Activated CD4-positive, alpha-beta memory T cell treated with anti-CD3 and anti-CD28 coated beads, Interleukin-2, amount 10 ng/mL, durations not matched to agents 7 days and 5 days (primary cell): ENCODE measurements at regions of chr22 and their contacts with region 1.

Region 1: DNA sequence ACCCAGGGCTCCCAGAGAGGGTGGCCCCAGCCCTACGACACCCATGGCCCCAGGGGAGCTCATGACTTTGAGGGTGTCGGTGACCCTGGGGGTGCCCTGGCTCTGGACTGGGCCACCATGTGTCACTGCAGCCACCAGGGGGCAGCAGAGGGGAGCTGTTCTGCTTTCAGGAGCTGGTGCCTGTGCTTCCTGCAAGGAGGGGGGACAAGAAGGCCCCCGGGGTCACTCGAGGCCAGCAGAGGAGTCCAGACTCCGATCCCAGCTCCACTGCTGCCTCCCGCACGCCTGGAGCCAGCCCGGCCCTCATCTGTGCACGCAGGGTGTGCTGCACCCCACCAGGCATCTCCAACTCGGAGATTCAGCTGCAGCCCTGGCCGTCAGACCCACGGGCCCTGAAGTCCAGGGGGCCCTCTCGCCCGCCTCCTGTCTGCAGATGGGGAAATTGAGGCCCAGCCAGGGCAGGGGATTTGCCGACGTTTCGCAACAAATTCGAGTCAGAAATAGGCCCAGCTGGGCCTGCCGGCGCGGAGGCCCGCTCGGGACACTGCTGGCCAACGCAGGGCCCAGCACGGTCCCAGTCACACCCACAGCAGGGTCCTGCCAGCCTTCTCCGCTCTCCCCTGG is 29.5 kb upstream of the WNT7B start:
- DNase-seq: peak; percentile 87
- H3K4me3 Mint-ChIP-seq: no peak overlapping the region
- H3K27ac Mint-ChIP-seq: no peak overlapping the region
- H3K4me1 Mint-ChIP-seq: peaks cover 7% of the 10 kb centered on the region
- H3K27me3 Mint-ChIP-seq: peaks cover 2% of the 10 kb centered on the region

Region 2: DNA sequence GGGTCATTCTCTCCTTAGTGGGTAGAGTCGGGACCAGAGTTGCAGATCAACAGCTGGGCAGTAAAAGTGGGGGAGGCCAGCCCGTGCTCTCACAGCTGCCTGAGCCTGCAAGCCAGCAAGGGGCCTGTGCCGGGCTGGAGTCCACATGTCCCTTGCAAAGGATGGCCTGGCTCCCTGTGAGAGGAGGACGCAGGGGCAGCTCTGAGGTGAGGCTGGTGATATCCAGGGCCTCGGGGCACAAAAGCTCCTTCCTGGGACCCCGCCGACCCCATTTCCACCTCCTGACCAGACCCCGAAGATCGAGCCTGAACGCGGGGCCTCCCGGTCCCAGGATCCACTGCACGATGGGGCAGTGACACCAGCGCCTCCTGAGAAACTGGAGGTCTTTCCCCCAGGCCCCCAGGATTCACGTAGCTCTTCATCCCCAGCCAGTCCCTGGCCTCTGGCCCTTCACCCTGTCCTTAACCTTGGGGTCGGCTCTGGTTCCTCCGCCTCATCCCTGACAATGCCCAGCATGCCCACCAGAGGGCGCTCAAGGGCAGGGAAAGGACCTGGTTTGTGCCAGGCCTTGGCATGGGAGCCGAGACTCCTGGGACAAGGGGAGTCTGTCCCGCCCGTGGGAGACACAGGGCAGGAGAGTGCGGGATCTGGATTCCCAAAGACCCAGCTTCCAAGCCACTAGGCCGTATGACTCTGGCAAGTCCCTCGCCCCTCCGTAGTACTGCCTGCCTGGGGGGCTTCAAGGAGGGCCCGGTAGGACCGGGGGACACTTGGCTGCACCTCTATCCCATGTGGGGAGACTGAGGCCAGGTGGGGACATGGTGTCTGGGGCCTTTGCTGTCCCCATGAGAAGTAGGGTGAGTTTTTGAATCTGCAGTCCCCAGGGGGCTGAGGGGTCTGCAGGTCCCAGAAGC is 11.7 kb before region 1 on chr22:
- CTCF ChIA-PET with region 1: interaction called, 34 read pairs
- POLR2A ChIA-PET with region 1: no interaction called
- DNase-seq: peak; percentile 79
- H3K4me3 Mint-ChIP-seq: no peak overlapping the region
- H3K27ac Mint-ChIP-seq: no peak overlapping the region
- H3K4me1 Mint-ChIP-seq: peaks cover 2% of the 10 kb centered on the region
- H3K27me3 Mint-ChIP-seq: no peaks in the 10 kb centered on the region

Region 3: GRCh38 chr22:46019351-46019750 is 12.9 kb after region 1 on chr22:
- CTCF ChIA-PET with region 1: interaction called, 33 read pairs
- POLR2A ChIA-PET with region 1: no interaction called
- DNase-seq: no peak
- H3K4me3 Mint-ChIP-seq: no peak overlapping the region
- H3K27ac Mint-ChIP-seq: no peak overlapping the region
- H3K4me1 Mint-ChIP-seq: peaks cover 5% of the 10 kb centered on the region
- H3K27me3 Mint-ChIP-seq: peaks cover 5% of the 10 kb centered on the region

Region 4: GRCh38 chr22:46035742-46036557 is 29.5 kb after region 1 on chr22:
- CTCF ChIA-PET with region 1: interaction called, 72 read pairs
- POLR2A ChIA-PET with region 1: interaction called, 22 read pairs
- DNase-seq: peak; percentile 100
- H3K4me3 Mint-ChIP-seq: peak overlapping the region; percentile 84
- H3K27ac Mint-ChIP-seq: peak overlapping the region; percentile 90
- H3K4me1 Mint-ChIP-seq: peaks cover 17% of the 10 kb centered on the region
- H3K27me3 Mint-ChIP-seq: no peaks in the 10 kb centered on the region

Region 5: DNA sequence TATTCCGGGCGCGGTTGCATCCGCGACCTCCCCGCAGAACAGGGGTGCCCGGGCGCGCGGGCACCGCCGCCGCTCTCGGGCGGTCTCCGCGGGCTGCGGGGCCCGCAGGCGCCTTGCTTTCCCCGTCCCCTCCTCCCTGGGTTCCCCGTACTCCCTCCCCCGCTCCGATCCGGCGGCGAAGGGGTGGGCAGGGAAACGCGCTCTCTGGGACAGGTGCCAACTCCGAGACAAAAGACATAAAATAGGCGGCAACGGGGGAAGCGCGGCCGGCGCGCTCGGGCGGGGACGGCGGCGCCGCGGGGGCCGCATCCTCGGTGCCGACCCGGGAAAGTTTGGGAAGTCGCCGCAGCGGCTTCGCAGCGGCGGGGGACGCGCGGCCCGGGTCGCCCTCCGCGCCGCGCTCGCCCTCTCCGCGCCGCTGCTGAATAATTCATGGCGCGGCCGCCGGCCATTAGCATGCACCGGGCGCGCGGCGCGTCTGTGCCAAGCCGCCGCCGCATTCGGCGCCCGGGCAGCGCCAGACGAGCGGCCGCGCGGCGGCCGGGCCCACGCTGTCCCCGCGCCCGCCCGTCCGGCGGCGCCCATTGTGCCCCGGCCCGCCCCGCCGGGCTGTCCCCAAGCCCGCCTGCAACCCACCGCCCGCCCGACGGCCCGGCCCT is 65.1 kb after region 1 on chr22:
- CTCF ChIA-PET with region 1: interaction called, 14 read pairs
- POLR2A ChIA-PET with region 1: interaction called, 6 read pairs
- DNase-seq: peak; percentile 52
- H3K4me3 Mint-ChIP-seq: peak overlapping the region; percentile 82
- H3K27ac Mint-ChIP-seq: peak overlapping the region; percentile 86
- H3K4me1 Mint-ChIP-seq: peaks cover 60% of the 10 kb centered on the region
- H3K27me3 Mint-ChIP-seq: peaks cover 2% of the 10 kb centered on the region

Region 6: DNA sequence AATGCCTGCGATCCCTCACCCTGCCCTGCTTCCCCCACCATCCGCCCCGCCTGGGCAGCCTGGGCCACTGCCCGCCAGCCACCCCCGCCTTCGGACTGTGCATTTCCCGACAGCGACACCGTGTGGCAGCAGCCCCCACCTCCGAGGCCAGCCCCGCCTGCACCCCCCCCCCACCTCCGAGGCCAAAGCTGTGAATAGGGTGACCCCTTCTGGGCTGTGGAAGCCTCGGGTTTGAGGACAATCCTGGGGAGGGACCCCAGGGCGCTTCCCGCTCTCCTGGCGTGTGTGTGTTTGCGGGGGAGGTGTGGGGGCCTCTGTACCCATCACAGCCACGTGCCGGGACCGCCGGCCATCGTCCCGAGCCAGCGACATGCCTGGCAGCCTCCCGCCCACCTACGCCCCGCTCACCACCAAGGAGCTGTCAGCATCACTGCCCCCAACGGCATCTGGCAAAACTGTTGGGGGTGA is 110.0 kb after region 1 on chr22:
- CTCF ChIA-PET with region 1: interaction called, 85 read pairs
- POLR2A ChIA-PET with region 1: interaction called, 7 read pairs
- DNase-seq: peak; percentile 85
- H3K4me3 Mint-ChIP-seq: no peak overlapping the region
- H3K27ac Mint-ChIP-seq: no peak overlapping the region
- H3K4me1 Mint-ChIP-seq: peaks cover 3% of the 10 kb centered on the region
- H3K27me3 Mint-ChIP-seq: no peaks in the 10 kb centered on the region

Region 7: DNA sequence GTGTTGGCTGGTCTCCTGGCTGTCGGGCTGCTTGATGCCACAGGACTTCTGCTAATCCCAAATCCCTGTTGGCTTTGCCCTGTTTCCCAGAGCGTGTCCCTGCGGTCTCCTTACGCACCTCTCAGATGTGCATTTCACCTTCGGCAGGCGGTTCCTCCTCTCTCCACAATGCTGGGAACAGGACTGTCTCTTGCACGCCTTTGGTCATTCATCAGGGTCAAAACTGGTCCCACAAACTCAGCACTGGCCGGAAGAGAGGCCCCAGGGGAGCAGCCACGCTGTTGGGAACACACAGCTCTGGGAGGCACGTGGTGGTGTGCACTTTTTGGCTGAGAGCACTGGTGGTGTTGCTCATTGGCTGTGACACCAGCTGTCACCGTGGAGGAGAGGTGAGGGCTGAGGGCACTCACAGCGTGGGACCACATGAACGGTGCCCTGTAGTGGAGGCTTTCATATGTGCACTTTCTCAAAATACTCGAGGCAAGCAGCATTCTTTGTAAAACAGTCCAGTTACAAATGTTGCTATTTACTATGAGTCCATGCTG is 313.7 kb after region 1 on chr22:
- CTCF ChIA-PET with region 1: no interaction called
- POLR2A ChIA-PET with region 1: no interaction called
- DNase-seq: no peak
- H3K4me3 Mint-ChIP-seq: no peak overlapping the region
- H3K27ac Mint-ChIP-seq: no peak overlapping the region
- H3K4me1 Mint-ChIP-seq: no peaks in the 10 kb centered on the region
- H3K27me3 Mint-ChIP-seq: no peaks in the 10 kb centered on the region